Dendritic cell treated with granulocyte-macrophage colony-stimulating factor and Interleukin-4, amounts not matched to agents 40 ng/mL and 50 ng/mL, for 4 days (primary cell): ENCODE measurements at regions of chr5 and their contacts with region 1.

Region 1: GRCh38 chr5:177554474-177555111 is at the start of gene FAM193B:
- H3K4me3 Mint-ChIP-seq: peak within 1 kb of the TSS; percentile 81
- H3K27ac Mint-ChIP-seq: peak within 1 kb of the TSS; percentile 56
- H3K4me1 Mint-ChIP-seq: peaks cover 32% of the 10 kb centered on the region
- H3K27me3 Mint-ChIP-seq: peaks cover 2% of the 10 kb centered on the region

Region 2: GRCh38 chr5:177189416-177189815 is 365.2 kb before region 1 on chr5:
- intact Hi-C with region 1: no loop called
- H3K4me3 Mint-ChIP-seq: no peak overlapping the region
- H3K27ac Mint-ChIP-seq: no peak overlapping the region
- H3K4me1 Mint-ChIP-seq: peaks cover 18% of the 10 kb centered on the region
- H3K27me3 Mint-ChIP-seq: no peaks in the 10 kb centered on the region

Region 3: GRCh38 chr5:177516604-177517568 is 37.7 kb before region 1 on chr5 and contains the start of gene DDX41:
- intact Hi-C with region 1: loop called (anchors 1 kb)
- H3K4me3 Mint-ChIP-seq: peak within 1 kb of the TSS; percentile 95
- H3K27ac Mint-ChIP-seq: peak within 1 kb of the TSS; percentile 77
- H3K4me1 Mint-ChIP-seq: peaks cover 65% of the 10 kb centered on the region
- H3K27me3 Mint-ChIP-seq: no peaks in the 10 kb centered on the region

Region 4: DNA sequence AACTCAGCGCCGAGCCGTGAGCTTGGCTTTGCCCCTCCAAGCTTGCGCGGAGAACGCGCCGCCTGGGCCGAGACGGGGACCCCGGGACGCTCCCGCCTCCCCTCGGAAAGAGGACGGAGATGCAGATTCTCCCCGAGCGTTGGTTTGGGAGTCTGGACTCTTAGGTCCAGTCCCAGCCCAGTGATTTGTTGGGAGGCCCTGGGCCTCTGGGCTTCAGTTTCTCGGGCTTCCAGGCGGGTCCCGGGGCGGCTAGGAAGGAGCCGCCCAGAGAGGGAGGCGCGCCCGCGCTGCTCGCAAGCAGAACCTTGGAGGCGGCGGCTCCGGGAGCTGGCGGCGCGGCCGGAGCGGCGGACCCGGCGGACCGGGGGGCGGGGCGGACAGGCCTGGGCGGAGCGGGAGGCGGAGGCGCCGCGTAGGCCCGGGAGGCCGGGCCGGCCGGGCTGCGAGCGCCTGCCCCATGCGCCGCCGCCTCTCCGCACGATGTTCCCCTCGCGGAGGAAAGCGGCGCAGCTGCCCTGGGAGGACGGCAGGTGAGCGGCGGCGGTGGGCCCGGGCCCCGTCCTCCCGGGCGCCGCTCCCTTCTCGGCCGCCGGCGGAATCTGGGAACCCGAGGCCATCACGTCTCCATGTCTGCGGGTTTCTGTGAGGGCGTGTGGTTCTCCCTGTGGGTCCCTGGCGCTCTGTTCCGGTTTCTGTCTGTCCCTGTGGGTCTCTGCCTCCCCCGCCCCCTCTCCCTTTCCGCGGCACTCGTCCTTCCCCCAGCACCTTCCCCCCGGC is 45.3 kb after region 1 on chr5 and contains the start of gene B4GALT7:
- intact Hi-C with region 1: loop called (anchors 5 kb)
- H3K4me3 Mint-ChIP-seq: peak within 1 kb of the TSS; percentile 92
- H3K27ac Mint-ChIP-seq: peak within 1 kb of the TSS; percentile 84
- H3K4me1 Mint-ChIP-seq: peaks cover 47% of the 10 kb centered on the region
- H3K27me3 Mint-ChIP-seq: no peaks in the 10 kb centered on the region